Caco-2 (cell line): ENCODE measurements at regions of chr9 and their contacts with region 1.

Region 1: DNA sequence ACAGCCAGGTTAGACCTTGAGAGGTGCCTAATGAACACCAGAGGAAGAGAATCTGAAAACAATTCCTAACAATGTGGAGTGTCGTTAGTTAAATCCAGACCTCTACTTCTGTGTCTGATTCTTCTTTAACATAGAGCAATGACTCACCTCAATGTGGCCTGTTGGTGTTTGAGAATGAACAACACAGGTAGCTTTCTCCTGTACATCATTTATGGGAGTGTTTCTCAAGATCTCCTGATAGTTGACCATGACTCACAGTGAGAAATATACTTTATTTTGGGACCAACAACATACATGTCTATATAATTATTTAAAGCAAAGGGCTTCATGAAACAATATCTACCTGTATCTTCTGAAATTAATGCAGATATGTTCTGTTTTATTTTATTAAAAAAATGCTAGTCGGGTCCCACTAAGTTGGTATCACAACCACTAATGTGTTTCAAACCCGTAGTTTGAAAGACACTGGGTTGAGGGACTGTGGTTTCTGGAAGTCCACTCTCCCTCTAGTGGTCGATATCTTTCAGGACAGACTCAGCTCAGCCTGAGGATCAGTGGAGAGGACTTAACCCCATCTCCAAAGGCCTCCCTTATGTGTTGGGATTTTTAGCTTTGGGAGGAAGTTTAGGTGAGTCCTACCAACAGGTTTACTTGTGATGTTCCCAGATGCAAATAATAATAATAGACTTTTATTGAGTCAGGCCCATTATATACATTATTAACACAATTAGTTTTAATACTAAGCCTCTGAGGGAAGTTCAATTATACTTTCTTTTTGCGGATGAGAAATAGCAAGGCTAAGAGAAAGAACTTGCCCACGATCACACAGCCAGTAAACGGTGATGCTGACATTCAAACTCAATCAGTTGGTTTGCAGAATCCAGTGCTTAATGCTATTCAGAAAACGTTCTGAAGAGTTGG is 70.0 kb upstream of the KLF9 start:
- DNase-seq: peak; percentile 3 to 27
- H3K4me3 ChIP-seq: no peak overlapping the region
- H3K4me3 Mint-ChIP-seq: no peak overlapping the region
- H3K27ac Mint-ChIP-seq: no peak overlapping the region
- H3K4me1 ChIP-seq: no peaks in the 10 kb centered on the region
- H3K4me1 Mint-ChIP-seq: no peaks in the 10 kb centered on the region
- H3K27me3 ChIP-seq: no peaks in the 10 kb centered on the region
- H3K27me3 Mint-ChIP-seq: no peaks in the 10 kb centered on the region
- CTCF ChIP-seq: peak in 1 of 2 experiments; percentile 38

Region 2: GRCh38 chr9:69996967-69997366 is 487.5 kb before region 1 on chr9:
- CTCF ChIA-PET with region 1: no interaction called
- POLR2A ChIA-PET with region 1: no interaction called
- intact Hi-C with region 1: no loop called
- DNase-seq: no peak
- H3K4me3 ChIP-seq: no peak overlapping the region
- H3K4me3 Mint-ChIP-seq: no peak overlapping the region
- H3K27ac Mint-ChIP-seq: no peak overlapping the region
- H3K4me1 ChIP-seq: no peaks in the 10 kb centered on the region
- H3K4me1 Mint-ChIP-seq: no peaks in the 10 kb centered on the region
- H3K27me3 ChIP-seq: no peaks in the 10 kb centered on the region
- H3K27me3 Mint-ChIP-seq: no peaks in the 10 kb centered on the region
- CTCF ChIP-seq: no peak

Region 3: GRCh38 chr9:70340572-70340971 is 143.9 kb before region 1 on chr9:
- CTCF ChIA-PET with region 1: no interaction called
- POLR2A ChIA-PET with region 1: no interaction called
- intact Hi-C with region 1: loop called (anchors 1 kb)
- DNase-seq: no peak
- H3K4me3 ChIP-seq: no peak overlapping the region
- H3K4me3 Mint-ChIP-seq: no peak overlapping the region
- H3K27ac Mint-ChIP-seq: no peak overlapping the region
- H3K4me1 ChIP-seq: no peaks in the 10 kb centered on the region
- H3K4me1 Mint-ChIP-seq: no peaks in the 10 kb centered on the region
- H3K27me3 ChIP-seq: no peaks in the 10 kb centered on the region
- H3K27me3 Mint-ChIP-seq: no peaks in the 10 kb centered on the region
- CTCF ChIP-seq: no peak

Region 4: GRCh38 chr9:70419546-70420266 is 64.8 kb before region 1 on chr9:
- CTCF ChIA-PET with region 1: no interaction called
- POLR2A ChIA-PET with region 1: interaction called, 4 read pairs
- intact Hi-C with region 1: loop called (anchors 5 kb)
- DNase-seq: peak; percentile 74 to 78
- H3K4me3 ChIP-seq: peak overlapping the region; percentile 35
- H3K4me3 Mint-ChIP-seq: peak overlapping the region; percentile 77
- H3K27ac Mint-ChIP-seq: peak overlapping the region; percentile 87
- H3K4me1 ChIP-seq: no peaks in the 10 kb centered on the region
- H3K4me1 Mint-ChIP-seq: no peaks in the 10 kb centered on the region
- H3K27me3 ChIP-seq: no peaks in the 10 kb centered on the region
- H3K27me3 Mint-ChIP-seq: no peaks in the 10 kb centered on the region
- CTCF ChIP-seq: no peak

Region 5: DNA sequence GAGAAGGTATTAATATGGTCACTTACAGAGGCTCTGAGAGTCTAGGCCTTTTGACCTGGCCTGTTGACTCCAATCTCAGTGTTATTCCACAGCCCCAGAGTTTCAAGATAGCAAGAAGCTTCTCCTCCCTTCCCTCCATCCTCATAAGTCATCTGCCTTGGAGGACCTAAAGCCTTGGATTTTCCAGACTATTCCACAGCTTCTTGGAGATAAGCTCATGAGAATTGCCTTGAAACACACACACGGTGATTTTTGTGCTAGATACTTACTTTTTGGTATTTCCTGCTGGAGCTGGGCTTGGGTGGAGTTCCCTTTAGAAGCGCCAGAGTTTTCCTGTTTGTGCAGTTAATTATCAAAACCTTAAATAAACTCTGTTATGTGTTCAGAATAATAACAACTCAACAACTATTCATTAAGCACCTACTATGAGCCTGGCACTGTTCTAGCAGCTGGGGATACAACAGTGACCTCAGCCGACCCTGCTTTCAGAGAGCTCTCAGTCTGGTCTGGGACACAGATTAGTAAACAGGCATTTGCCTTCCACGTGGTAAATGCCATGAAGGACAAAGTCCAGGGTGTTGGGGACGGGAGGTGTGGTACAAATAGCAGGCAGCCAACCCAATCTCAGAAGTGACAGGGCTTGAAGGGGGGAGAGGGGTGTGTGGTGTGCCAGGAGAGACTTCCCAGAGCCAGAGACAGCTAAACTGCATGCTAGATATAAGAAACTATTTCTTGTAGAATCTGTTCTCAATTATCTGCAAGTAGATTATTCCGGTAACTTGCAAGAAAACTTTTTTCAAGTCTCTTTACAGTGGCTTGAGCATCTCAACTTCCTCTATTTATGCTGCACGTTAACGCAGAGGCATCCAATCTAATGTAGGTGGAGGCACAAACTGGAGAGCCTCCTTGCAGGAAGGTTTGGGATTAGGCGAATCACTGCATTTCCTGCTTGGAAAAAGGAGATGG is 14.1 kb before region 1 on chr9:
- CTCF ChIA-PET with region 1: no interaction called
- POLR2A ChIA-PET with region 1: no interaction called
- intact Hi-C with region 1: no loop called
- DNase-seq: peak; percentile 13 to 31
- H3K4me3 ChIP-seq: no peak overlapping the region
- H3K4me3 Mint-ChIP-seq: peak overlapping the region; percentile 47
- H3K27ac Mint-ChIP-seq: peak overlapping the region; percentile 67
- H3K4me1 ChIP-seq: no peaks in the 10 kb centered on the region
- H3K4me1 Mint-ChIP-seq: no peaks in the 10 kb centered on the region
- H3K27me3 ChIP-seq: no peaks in the 10 kb centered on the region
- H3K27me3 Mint-ChIP-seq: no peaks in the 10 kb centered on the region
- CTCF ChIP-seq: no peak

Region 6: GRCh38 chr9:70602321-70603019 is 118.0 kb after region 1 on chr9:
- CTCF ChIA-PET with region 1: interaction called, 3 read pairs
- POLR2A ChIA-PET with region 1: no interaction called
- intact Hi-C with region 1: loop called (anchors 5 kb)
- DNase-seq: peak; percentile 18 to 26
- H3K4me3 ChIP-seq: no peak overlapping the region
- H3K4me3 Mint-ChIP-seq: no peak overlapping the region
- H3K27ac Mint-ChIP-seq: no peak overlapping the region
- H3K4me1 ChIP-seq: no peaks in the 10 kb centered on the region
- H3K4me1 Mint-ChIP-seq: no peaks in the 10 kb centered on the region
- H3K27me3 ChIP-seq: no peaks in the 10 kb centered on the region
- H3K27me3 Mint-ChIP-seq: peaks cover 3% of the 10 kb centered on the region
- CTCF ChIP-seq: peak; percentile 32 to 41